HEK293 (cell line): ENCODE measurements at regions of chr15 and their contacts with region 1.

Region 1: DNA sequence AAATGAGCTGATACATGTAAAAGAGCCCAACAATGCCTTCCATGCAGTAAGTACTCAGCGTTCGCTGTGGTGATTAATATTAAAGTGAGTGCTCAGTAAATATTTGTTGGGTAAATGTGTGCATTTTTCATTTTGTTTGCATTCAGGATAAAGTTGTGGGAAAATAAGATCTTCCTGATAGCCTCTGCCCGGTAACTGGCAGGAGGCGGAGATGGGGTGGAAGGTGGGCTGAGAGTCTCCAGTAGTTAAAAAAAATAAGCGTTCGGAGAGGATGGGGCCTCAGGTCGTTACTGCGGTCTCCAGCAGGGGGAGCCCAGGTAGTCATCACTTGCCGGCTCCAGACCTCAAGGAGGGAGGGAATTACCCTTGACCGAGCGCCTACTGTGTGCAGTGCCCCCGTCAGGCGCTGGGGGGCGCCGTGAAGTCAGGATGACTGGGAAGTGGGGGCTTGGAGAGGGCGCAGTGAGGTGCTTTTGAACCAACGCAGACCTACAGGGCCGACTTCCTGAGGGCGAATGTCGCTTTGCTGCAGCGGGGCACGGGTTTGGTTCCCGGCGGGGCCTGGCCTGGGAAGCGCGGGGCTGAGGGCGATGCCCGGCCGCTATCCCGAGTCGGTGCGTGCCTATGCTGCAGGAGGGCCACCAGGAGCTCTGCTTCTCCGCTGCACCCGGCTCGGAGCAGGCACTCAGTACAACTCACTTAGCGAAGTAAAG is 80.1 kb downstream of the RHCG start:
- H3K4me3 ChIP-seq: no peak overlapping the region
- H3K27ac ChIP-seq: no peak overlapping the region
- H3K4me1 ChIP-seq: no peaks in the 10 kb centered on the region
- CTCF ChIP-seq: peak; percentile 92

Region 2: GRCh38 chr15:89367485-89368451 is 48.5 kb before region 1 on chr15:
- CTCF ChIA-PET with region 1: interaction called, 614 read pairs
- POLR2A ChIA-PET with region 1: interaction called, 3 read pairs
- H3K4me3 ChIP-seq: no peak overlapping the region
- H3K27ac ChIP-seq: no peak overlapping the region
- H3K4me1 ChIP-seq: no peaks in the 10 kb centered on the region
- CTCF ChIP-seq: no peak

Region 3: DNA sequence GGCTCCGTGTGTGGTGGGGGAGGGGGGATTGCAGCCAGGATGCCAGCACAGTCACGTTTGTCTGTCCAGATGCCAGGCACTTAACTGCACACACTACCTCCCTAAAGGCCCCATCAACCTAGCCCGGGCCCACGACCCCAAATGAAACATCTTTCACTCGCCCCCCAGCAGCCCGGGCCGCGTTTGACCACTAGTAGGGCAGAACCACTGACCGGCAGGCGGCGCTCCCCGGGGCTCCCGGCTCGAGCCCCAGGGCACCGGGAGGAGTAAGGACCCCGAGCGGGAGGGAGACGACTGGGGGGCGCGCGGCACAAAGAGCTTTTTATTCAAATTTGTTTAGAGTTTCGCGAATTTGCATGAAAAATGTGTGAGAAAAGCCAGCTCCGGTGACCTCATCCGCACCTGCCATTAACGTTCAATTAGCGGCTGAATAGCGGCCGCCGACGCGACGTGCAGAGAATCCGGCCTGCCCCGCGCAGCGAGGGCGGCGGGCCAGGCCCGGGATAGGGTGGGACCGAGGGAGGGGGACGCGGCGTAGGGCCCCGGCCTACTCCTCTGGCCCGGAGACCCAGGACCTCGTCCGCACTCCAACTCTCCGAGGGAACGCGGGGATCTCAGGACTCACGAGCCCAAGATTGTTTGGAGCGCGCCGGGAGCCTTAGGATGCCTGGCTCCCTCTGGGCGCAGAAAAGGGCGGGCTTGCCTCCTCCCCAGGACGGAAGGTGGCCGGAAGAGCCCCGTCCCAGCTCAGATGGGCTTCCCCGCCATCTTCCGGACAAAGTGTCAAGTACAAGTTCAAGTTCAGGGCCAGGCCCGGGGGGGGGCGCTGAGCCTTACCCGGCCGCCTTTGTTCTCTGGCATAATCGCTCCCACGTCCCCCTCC is 16.8 kb before region 1 on chr15:
- CTCF ChIA-PET with region 1: interaction called, 15 read pairs
- POLR2A ChIA-PET with region 1: interaction called, 5 read pairs
- H3K4me3 ChIP-seq: peak overlapping the region; percentile 45
- H3K27ac ChIP-seq: peak overlapping the region; percentile 66; the same call in 1 of the 2 replicates
- H3K4me1 ChIP-seq: peaks cover 8% of the 10 kb centered on the region
- CTCF ChIP-seq: peak; percentile 85

Region 4: DNA sequence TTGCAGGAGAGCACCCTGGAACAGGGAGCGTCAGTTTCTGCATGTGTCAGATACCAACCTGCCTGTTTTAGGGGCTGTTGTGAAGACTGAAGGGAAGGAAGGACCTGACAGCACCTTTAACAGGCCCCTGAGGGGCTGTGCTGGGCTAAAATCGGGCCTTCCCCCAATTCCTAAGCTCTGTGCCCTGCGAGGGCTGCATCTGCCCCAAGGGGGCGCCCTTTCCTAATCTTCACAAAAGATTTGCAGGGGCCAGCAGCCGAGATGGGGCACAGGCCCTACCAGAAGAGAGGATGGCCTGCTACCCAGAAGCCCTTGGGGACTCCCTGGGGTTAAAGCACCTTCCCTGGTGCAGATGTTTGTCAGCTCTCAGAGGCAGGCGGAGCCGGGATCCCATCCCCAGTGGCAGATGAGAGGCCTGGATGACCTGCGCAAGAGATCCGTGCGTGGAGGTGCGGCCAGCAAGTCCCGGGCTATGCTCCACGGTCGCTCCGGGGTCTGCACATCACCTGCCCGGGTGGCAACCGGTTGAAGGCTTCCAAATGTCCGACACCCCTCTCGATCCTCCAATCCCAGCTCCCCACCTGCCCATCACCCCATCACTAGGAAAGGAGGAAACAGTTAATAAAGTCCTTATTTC is 26.5 kb after region 1 on chr15:
- CTCF ChIA-PET with region 1: interaction called, 58 read pairs
- POLR2A ChIA-PET with region 1: no interaction called
- H3K4me3 ChIP-seq: no peak overlapping the region
- H3K27ac ChIP-seq: no peak overlapping the region
- H3K4me1 ChIP-seq: no peaks in the 10 kb centered on the region
- CTCF ChIP-seq: peak; percentile 61; the same call in 1 of the 2 replicates

Region 5: GRCh38 chr15:89472785-89473256 is 56.5 kb after region 1 on chr15:
- CTCF ChIA-PET with region 1: interaction called, 74 read pairs
- POLR2A ChIA-PET with region 1: no interaction called
- H3K4me3 ChIP-seq: no peak overlapping the region
- H3K27ac ChIP-seq: no peak overlapping the region
- H3K4me1 ChIP-seq: no peaks in the 10 kb centered on the region
- CTCF ChIP-seq: peak; percentile 90

Region 6: GRCh38 chr15:89893696-89894455 is 477.6 kb after region 1 on chr15 and contains the start of gene AP3S2:
- CTCF ChIA-PET with region 1: no interaction called
- POLR2A ChIA-PET with region 1: no interaction called
- H3K4me3 ChIP-seq: peak within 1 kb of the TSS; percentile 64
- H3K27ac ChIP-seq: peak within 1 kb of the TSS; percentile 84
- H3K4me1 ChIP-seq: peaks cover 3% of the 10 kb centered on the region
- CTCF ChIP-seq: no peak